Naive thymus-derived CD4-positive, alpha-beta T cell (primary cell): ENCODE measurements at regions of chr1 and their contacts with region 1.

Region 1: DNA sequence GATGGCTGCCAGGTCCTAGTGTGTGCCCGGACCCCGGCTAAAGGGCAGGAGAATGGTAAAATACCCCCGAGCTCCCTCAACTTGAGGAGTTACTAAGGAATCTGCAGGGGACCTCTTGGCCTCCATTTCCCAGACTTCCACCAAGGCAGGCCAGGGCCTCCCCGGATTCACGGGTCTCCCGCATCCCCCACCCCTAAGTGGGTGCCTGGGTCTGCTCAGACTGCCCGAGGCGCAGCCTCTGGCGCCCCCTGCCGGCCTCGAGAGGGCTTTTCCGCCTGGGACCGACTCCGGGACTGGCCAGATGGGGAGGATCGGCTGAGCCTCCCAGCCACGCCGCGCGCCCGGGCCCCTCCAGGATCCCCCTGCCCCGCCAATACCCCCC is 1.7 kb downstream of the PLEKHG5 start:
- DNase-seq: peak; percentile 66 to 87 (median 77)
- ATAC-seq: peak; percentile 77
- H3K4me3 ChIP-seq: peak overlapping the region; percentile 80
- H3K4me3 Mint-ChIP-seq: peak overlapping the region; percentile 63 to 87 (median 81)
- H3K27ac ChIP-seq: peak overlapping the region; percentile 71
- H3K27ac Mint-ChIP-seq: peak overlapping the region in 1 of 9 donors; percentile 79
- H3K4me1 ChIP-seq: peaks cover 13 to 18% of the 10 kb centered on the region in 2 donors
- H3K4me1 Mint-ChIP-seq: peaks cover 20 to 37% (median 31%) of the 10 kb centered on the region in 7 donors
- H3K27me3 ChIP-seq: peaks cover 0 to 6% of the 10 kb centered on the region in 2 donors
- H3K27me3 Mint-ChIP-seq: peaks cover 6 to 24% (median 9%) of the 10 kb centered on the region in 5 donors

Region 2: DNA sequence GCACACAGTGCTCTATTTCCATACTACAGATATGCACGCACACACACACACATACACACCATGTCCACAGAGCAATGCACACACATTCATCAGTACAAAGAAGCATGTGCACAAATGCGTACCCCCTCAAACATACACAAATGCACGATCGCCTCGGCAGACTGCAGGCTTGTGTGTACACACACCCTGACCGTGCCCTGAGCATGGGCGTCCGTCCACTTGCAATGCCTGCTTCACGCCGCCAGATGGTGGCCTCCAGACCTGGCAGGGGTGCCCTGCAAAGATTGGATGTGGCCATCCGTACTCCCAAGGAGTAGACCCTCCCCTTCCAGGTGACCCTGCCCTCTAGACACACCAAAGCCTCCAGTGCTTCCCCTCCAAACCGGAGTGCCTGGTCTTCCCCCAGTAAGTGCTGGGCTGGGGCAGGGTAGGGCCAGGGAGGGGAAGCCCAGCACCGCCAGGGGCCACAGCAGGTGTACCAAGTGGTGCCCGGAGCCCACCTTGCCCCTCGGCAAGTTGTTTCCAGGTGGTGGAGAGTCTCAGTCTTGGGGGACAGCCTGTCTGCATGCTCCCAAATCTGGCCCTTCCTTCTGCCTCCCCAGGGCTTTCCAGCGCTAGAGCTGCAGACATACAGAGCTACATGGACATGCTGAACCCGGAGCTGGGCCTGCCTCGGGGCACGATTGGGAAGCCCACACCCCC is 44.6 kb before region 1 on chr1:
- CTCF ChIA-PET with region 1: interaction called, 4 read pairs
- POLR2A ChIA-PET with region 1: interaction called, 3 read pairs
- intact Hi-C with region 1: loop called (anchors 1 to 5 kb)
- DNase-seq: peak in 3 of 9 donors; percentile 36 to 44 (median 43)
- ATAC-seq: peak; percentile 33
- H3K4me3 ChIP-seq: no peak overlapping the region
- H3K4me3 Mint-ChIP-seq: peak overlapping the region in 3 of 10 donors; percentile 0 to 64 (median 0)
- H3K27ac ChIP-seq: no peak overlapping the region
- H3K27ac Mint-ChIP-seq: peak overlapping the region in 3 of 9 donors; percentile 1 to 53 (median 2)
- H3K4me1 ChIP-seq: peaks cover 4 to 19% of the 10 kb centered on the region in 2 donors
- H3K4me1 Mint-ChIP-seq: peaks cover 13 to 29% (median 17%) of the 10 kb centered on the region in 7 donors
- H3K27me3 ChIP-seq: peaks cover 4 to 18% of the 10 kb centered on the region in 2 donors
- H3K27me3 Mint-ChIP-seq: peaks cover 19 to 61% (median 30%) of the 10 kb centered on the region in 5 donors

Region 3: DNA sequence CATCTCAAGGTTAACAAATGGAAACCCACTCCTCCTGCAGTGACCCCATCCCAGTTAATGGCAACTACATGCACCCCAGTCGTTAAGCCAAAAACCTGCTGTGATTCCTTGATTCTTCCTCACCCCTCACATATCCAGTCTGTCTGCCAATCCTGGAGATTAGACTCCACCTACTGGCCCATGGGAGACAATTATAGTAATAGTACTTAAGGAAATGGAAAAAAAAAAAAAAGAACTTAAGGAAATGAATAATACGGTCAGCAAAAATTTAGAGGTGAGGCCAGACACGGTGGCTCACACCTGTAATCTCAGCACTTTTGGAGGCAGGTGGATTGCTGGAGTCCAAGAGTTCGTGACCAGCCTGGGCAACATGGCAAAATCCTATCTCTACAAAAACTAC is 57.5 kb after region 1 on chr1:
- CTCF ChIA-PET with region 1: interaction called, 32 read pairs
- POLR2A ChIA-PET with region 1: interaction called, 7 read pairs
- intact Hi-C with region 1: loop called in 1 of 2 experiments (anchors 2 kb)
- DNase-seq: no peak
- ATAC-seq: no peak
- H3K4me3 ChIP-seq: no peak overlapping the region
- H3K4me3 Mint-ChIP-seq: peak overlapping the region in 4 of 10 donors; percentile 62 to 76 (median 68)
- H3K27ac ChIP-seq: peak overlapping the region; percentile 68
- H3K27ac Mint-ChIP-seq: peak overlapping the region; percentile 73 to 99 (median 91)
- H3K4me1 ChIP-seq: peaks cover 4 to 28% of the 10 kb centered on the region in 2 donors
- H3K4me1 Mint-ChIP-seq: peaks cover 25 to 44% (median 33%) of the 10 kb centered on the region in 7 donors
- H3K27me3 ChIP-seq: no peaks in the 10 kb centered on the region
- H3K27me3 Mint-ChIP-seq: no peaks in the 10 kb centered on the region

Region 4: DNA sequence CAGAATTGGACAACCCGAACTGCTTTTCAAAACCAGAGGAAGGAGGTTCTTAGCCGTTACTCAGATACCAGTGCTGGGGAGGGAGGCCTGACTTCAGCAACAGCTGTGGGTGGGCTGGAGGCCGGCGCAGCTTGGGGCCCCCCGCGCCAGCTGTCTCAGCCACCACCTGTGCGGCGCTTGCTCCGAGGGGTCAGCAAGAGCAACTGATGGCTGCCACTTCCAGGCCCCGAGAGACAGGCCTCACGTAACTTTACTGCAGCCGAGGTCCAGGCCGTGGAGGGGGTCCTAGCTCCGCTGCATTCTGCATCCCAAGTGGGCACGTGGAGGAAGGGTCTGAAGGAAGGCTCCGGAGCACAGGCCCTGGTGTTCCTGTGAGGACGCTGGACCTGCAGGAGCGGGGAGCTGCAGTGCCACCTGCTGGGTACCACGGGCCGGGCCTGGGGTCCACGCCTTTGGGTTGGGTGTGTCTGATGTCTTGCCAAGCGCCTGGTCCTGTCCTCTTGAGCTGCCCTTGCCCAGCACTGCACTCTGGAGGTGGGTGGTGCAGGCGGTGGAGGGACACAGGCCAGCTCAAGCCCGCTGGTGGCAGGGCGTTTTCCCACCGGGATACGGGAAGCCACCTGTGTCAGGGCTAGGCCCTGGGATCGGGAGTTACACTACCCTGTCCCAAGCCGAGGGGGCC is 144.7 kb after region 1 on chr1:
- CTCF ChIA-PET with region 1: interaction called, 8 read pairs
- POLR2A ChIA-PET with region 1: no interaction called
- intact Hi-C with region 1: loop called (anchors 1 to 5 kb)
- DNase-seq: peak in 4 of 9 donors; percentile 24 to 40 (median 34)
- ATAC-seq: peak; percentile 69
- H3K4me3 ChIP-seq: no peak overlapping the region
- H3K4me3 Mint-ChIP-seq: no peak overlapping the region
- H3K27ac ChIP-seq: no peak overlapping the region
- H3K27ac Mint-ChIP-seq: peak overlapping the region in 1 of 9 donors; percentile 38
- H3K4me1 ChIP-seq: no peaks in the 10 kb centered on the region
- H3K4me1 Mint-ChIP-seq: peaks cover 0 to 5% (median under 1%) of the 10 kb centered on the region in 7 donors
- H3K27me3 ChIP-seq: no peaks in the 10 kb centered on the region
- H3K27me3 Mint-ChIP-seq: no peaks in the 10 kb centered on the region

Region 5: GRCh38 chr1:6701437-6702153 is 211.8 kb after region 1 on chr1 and contains the start of gene DNAJC11:
- CTCF ChIA-PET with region 1: no interaction called
- POLR2A ChIA-PET with region 1: no interaction called
- intact Hi-C with region 1: loop called in 1 of 2 experiments (anchors 1 kb)
- DNase-seq: peak; percentile 84 to 99 (median 93)
- ATAC-seq: peak; percentile 99
- H3K4me3 ChIP-seq: peak within 1 kb of the TSS; percentile 90
- H3K4me3 Mint-ChIP-seq: peak within 1 kb of the TSS; percentile 87 to 96 (median 93)
- H3K27ac ChIP-seq: peak within 1 kb of the TSS; percentile 92
- H3K27ac Mint-ChIP-seq: peak within 1 kb of the TSS; percentile 77 to 95 (median 92)
- H3K4me1 ChIP-seq: peaks cover 8 to 9% of the 10 kb centered on the region in 2 donors
- H3K4me1 Mint-ChIP-seq: peaks cover 7 to 40% (median 32%) of the 10 kb centered on the region in 7 donors
- H3K27me3 ChIP-seq: no peaks in the 10 kb centered on the region
- H3K27me3 Mint-ChIP-seq: no peaks in the 10 kb centered on the region
- total RNA-seq, gene DNAJC11: 37.2 to 49.7 (median 44.0) TPM